WTC11 (cell line): ENCODE measurements at regions of chr10 and their contacts with region 1.

Region 1: DNA sequence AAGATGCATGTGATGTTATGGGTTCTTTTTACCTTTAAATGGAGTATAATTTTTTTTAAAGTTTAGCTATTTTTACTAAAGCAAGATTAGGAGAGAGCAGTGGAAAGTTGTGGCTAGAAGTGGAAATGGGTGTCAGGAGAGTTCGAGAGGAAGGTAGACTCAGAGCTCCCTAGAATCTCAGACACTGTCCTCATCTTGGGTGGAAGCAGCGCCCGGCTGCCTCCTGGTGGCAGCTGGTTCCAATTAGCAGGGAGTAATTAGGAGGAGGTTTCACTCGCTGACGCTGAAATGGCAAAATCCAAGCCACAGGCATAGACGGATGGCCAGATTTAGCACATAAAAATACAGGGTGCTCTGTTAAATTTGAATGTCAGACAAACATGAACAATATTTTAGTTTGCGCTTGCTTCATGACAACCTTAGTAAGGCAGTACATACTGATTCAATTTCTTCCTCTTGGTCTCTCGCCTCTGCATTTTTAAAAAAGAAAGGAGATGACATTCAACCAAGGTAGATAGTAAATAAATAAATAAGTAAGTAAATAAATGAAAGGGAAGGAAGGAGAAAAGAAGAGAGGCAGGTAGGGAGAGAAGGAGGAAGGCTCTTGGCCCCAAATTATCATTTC is 58.5 kb downstream of the LGI1 start:
- DNase-seq: peak; percentile 62
- ATAC-seq: peak; percentile 79
- H3K4me3 Mint-ChIP-seq: no peak overlapping the region
- H3K27ac Mint-ChIP-seq: no peak overlapping the region
- H3K4me1 Mint-ChIP-seq: peaks cover 15% of the 10 kb centered on the region
- H3K27me3 Mint-ChIP-seq: peaks cover 42% of the 10 kb centered on the region
- CTCF ChIP-seq: peak; percentile 45

Region 2: GRCh38 chr10:93702211-93703001 is 113.8 kb before region 1 on chr10 and contains the start of gene FRA10AC1:
- CTCF ChIA-PET with region 1: interaction called, 28 read pairs
- POLR2A ChIA-PET with region 1: interaction called, 5 read pairs
- DNase-seq: peak; percentile 90
- ATAC-seq: peak; percentile 94
- H3K4me3 Mint-ChIP-seq: no peak within 1 kb of the TSS
- H3K27ac Mint-ChIP-seq: no peak within 1 kb of the TSS
- H3K4me1 Mint-ChIP-seq: peaks cover 14% of the 10 kb centered on the region
- H3K27me3 Mint-ChIP-seq: peaks cover under 1% of the 10 kb centered on the region
- CTCF ChIP-seq: no peak
- total RNA-seq, gene FRA10AC1: 12.9 to 15.8 TPM (median 14.1 TPM) in 3 replicates

Region 3: DNA sequence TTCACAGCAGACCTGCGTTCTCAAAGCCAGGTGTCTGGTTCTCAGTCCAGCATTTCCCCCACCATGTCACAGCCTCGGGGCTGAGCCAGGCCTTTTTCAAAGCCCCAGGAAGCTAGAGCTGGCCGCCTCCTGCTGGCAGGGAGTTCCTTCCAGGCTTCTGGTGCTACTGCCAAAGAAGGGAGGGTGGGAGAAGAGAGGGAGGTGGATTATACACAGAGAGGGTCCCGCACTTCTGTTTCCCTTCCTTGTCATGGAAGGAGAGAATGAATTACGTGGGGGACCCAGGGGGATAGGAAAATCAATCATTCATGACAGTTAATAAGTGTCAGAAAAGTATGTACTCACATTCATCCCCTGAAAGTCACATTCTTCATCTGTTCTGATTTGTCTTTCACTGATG is 59.1 kb before region 1 on chr10:
- CTCF ChIA-PET with region 1: interaction called, 17 read pairs
- POLR2A ChIA-PET with region 1: no interaction called
- DNase-seq: peak; percentile 29
- ATAC-seq: peak; percentile 60
- H3K4me3 Mint-ChIP-seq: no peak overlapping the region
- H3K27ac Mint-ChIP-seq: no peak overlapping the region; the same call in 1 of the 2 replicates
- H3K4me1 Mint-ChIP-seq: peaks cover 63% of the 10 kb centered on the region
- H3K27me3 Mint-ChIP-seq: peaks cover 28% of the 10 kb centered on the region
- CTCF ChIP-seq: no peak

Region 4: DNA sequence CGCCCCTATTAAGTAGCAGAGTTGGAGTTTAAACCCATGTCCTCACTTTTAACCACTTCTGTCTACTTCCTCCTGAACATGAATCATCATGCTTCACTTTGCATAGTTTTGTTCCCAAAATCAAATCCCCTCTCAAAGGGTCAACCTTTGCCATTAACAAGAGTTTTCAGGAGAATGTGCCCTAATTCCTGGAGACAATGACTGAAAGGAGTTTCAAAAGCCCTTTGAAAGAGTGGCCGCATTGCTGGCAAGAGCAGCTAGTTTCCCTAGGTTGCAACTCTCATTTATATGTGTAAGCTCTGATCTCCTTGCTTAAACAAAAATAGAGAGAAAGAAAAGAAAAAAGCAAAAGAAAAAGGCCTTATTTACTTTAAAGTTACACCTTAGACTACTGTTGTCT is 49.3 kb before region 1 on chr10:
- CTCF ChIA-PET with region 1: interaction called, 10 read pairs
- POLR2A ChIA-PET with region 1: no interaction called
- DNase-seq: no peak
- ATAC-seq: no peak
- H3K4me3 Mint-ChIP-seq: no peak overlapping the region
- H3K27ac Mint-ChIP-seq: no peak overlapping the region
- H3K4me1 Mint-ChIP-seq: peaks cover 30% of the 10 kb centered on the region
- H3K27me3 Mint-ChIP-seq: peaks cover 2% of the 10 kb centered on the region; the same call in 1 of the 2 replicates
- CTCF ChIP-seq: no peak

Region 5: GRCh38 chr10:93859049-93859655 is 42.9 kb after region 1 on chr10:
- CTCF ChIA-PET with region 1: interaction called, 21 read pairs
- POLR2A ChIA-PET with region 1: no interaction called
- DNase-seq: no peak
- ATAC-seq: no peak
- H3K4me3 Mint-ChIP-seq: no peak overlapping the region
- H3K27ac Mint-ChIP-seq: no peak overlapping the region
- H3K4me1 Mint-ChIP-seq: 0 out of 2 replicates have a peak, but pooled peaks cover 2% of the 10 kb centered on the region
- H3K27me3 Mint-ChIP-seq: peaks cover 82% of the 10 kb centered on the region
- CTCF ChIP-seq: peak; percentile 13; the same call in 1 of the 2 replicates

Region 6: GRCh38 chr10:93916257-93917063 is 100.2 kb after region 1 on chr10:
- CTCF ChIA-PET with region 1: interaction called, 29 read pairs
- POLR2A ChIA-PET with region 1: no interaction called
- DNase-seq: no peak
- ATAC-seq: peak; percentile 61
- H3K4me3 Mint-ChIP-seq: peak overlapping the region; percentile 41
- H3K27ac Mint-ChIP-seq: no peak overlapping the region
- H3K4me1 Mint-ChIP-seq: peaks cover 11% of the 10 kb centered on the region
- H3K27me3 Mint-ChIP-seq: no peaks in the 10 kb centered on the region
- CTCF ChIP-seq: no peak

Region 7: DNA sequence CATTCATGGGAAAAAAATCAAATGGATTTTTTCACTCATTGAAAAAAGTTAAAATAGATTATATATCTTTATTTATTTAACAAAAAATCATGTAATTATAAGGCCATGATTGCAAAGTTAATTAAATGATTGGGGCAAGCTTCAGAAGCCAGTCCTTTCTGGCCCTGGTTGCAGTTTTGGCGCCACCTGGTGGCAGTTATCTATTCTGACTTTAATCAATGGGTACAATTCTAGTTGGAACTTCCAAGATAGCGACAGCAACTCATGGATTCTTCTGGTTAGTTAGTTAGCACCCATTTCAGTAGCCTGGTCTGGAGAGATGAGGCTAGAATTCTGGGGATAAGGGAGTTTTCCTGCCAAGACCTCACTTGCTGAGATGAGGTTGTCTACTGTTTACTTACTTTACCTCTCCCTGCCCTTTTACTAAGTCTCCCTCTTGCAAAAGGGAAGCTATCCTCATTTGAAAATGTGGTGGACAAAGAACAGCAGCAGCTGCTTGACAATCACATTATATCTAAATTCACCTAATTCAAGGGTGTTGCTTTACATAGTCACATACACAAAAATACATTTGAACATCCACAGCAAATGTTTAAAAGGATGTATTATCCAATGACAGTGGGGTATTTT is 504.2 kb after region 1 on chr10:
- CTCF ChIA-PET with region 1: interaction called, 20 read pairs
- POLR2A ChIA-PET with region 1: no interaction called
- DNase-seq: peak; percentile 72
- ATAC-seq: peak; percentile 72
- H3K4me3 Mint-ChIP-seq: no peak overlapping the region
- H3K27ac Mint-ChIP-seq: no peak overlapping the region
- H3K4me1 Mint-ChIP-seq: no peaks in the 10 kb centered on the region
- H3K27me3 Mint-ChIP-seq: no peaks in the 10 kb centered on the region
- CTCF ChIP-seq: peak; percentile 70